ENCODE measurements at regions of chr21 and their contacts with region 1.

Region 1: GRCh38 chr21:32612075-32612998 is at the start of gene CFAP298:
- DNase-seq: peak; percentile 76 to 98 (median 86)
- ATAC-seq: peak; percentile 93
- H3K4me3 ChIP-seq: peak within 1 kb of the TSS; percentile 83
- H3K4me3 Mint-ChIP-seq: peak within 1 kb of the TSS; percentile 99
- H3K27ac ChIP-seq: peak within 1 kb of the TSS; percentile 76 to 96
- H3K27ac Mint-ChIP-seq: peak within 1 kb of the TSS; percentile 87
- H3K4me1 ChIP-seq: peaks cover 26% of the 10 kb centered on the region
- H3K4me1 Mint-ChIP-seq: peaks cover 27% of the 10 kb centered on the region
- H3K27me3 ChIP-seq: no peaks in the 10 kb centered on the region
- H3K27me3 Mint-ChIP-seq: no peaks in the 10 kb centered on the region
- CTCF ChIP-seq: no peak
- total RNA-seq, gene CFAP298: 7.6 to 9.4 TPM

Region 2: DNA sequence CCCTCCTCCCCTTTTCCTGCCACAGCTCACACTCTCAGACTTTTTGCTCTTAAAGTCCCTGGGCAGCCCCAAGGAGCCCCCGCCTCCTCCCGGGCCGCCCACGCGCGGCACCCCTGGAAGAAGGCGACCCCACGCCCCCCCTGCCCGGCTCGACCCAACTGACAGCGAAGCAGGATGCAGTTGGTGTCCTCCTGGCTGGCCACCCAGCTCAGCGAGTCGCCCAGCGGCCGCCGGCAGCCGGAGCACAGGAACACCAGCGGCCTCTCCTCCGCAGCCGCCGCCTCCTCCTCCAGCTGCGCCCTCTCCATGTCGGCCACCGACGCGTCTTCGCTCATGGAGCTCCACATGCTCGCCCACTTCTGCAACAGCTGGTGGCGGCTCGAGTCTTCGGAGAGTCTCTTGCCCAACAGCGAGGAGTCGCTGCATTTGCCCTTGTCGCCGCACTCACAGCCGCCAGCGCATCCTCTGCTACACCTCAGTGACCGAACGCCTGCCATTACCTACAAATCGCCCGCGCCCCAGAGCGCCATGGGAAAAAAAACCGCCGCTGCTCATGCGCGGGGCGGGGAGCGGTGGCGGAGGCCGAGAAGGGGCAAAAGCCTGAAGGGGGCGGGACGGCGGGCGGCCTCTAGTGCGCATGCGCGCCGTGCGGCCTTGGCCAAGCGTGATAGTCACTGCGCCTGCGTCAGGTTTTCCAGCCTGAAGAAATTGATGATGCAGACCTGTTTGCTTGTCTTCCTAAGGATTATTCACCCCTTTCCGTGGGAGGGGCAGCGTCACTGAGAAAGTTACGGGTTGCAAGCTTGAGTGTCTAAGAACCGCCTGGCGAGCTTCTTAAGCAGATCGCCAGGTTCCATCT is 333.6 kb before region 1 on chr21 and contains the start of gene MIS18A:
- CTCF ChIA-PET with region 1: no interaction called
- POLR2A ChIA-PET with region 1: no interaction called
- intact Hi-C with region 1: loop called (anchors 2 to 5 kb)
- DNase-seq: peak; percentile 92 to 99 (median 97)
- ATAC-seq: peak; percentile 94
- H3K4me3 ChIP-seq: peak within 1 kb of the TSS; percentile 94
- H3K4me3 Mint-ChIP-seq: peak within 1 kb of the TSS; percentile 99
- H3K27ac ChIP-seq: peak within 1 kb of the TSS in 1 of 2 donors; percentile 26
- H3K27ac Mint-ChIP-seq: peak within 1 kb of the TSS; percentile 94
- H3K4me1 ChIP-seq: peaks cover 20% of the 10 kb centered on the region
- H3K4me1 Mint-ChIP-seq: peaks cover 29% of the 10 kb centered on the region
- H3K27me3 ChIP-seq: no peaks in the 10 kb centered on the region
- H3K27me3 Mint-ChIP-seq: no peaks in the 10 kb centered on the region
- CTCF ChIP-seq: no peak
- total RNA-seq, gene MIS18A: 2.7 to 3.0 TPM

Region 3: GRCh38 chr21:32412162-32413014 is 199.9 kb before region 1 on chr21 and contains the start of gene EVA1C:
- CTCF ChIA-PET with region 1: no interaction called
- POLR2A ChIA-PET with region 1: interaction called, 19 read pairs
- intact Hi-C with region 1: no loop called
- DNase-seq: peak; percentile 54 to 92 (median 66)
- ATAC-seq: peak; percentile 62
- H3K4me3 ChIP-seq: peak within 1 kb of the TSS; percentile 96
- H3K4me3 Mint-ChIP-seq: peak within 1 kb of the TSS; percentile 97
- H3K27ac ChIP-seq: peak within 1 kb of the TSS; percentile 64 to 96
- H3K27ac Mint-ChIP-seq: peak within 1 kb of the TSS; percentile 97
- H3K4me1 ChIP-seq: peaks cover 31% of the 10 kb centered on the region
- H3K4me1 Mint-ChIP-seq: peaks cover 52% of the 10 kb centered on the region
- H3K27me3 ChIP-seq: no peaks in the 10 kb centered on the region
- H3K27me3 Mint-ChIP-seq: no peaks in the 10 kb centered on the region
- CTCF ChIP-seq: peak; percentile 17
- total RNA-seq, gene EVA1C: 11.1 to 12.7 TPM

Region 4: DNA sequence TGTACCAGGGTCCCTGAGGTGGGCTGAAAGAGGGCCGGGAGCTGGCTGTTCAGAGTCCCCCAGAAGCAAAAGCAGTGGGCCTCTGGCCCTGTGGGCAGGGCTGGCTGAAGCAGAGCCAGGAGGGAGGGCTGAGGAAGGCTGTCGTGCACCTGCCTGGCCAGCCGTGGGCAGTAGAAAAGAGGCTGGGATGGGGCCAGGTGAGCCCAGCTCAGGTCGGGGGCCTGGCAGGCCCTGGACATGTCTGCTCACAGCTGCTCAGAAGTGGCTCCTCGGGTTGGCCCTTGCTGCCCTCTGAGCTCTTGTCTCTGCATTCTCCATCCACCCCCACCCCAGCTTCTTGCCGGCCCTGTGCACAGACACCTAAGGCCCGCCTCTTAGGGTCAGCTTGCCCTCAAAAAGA is 87.1 kb before region 1 on chr21:
- CTCF ChIA-PET with region 1: no interaction called
- POLR2A ChIA-PET with region 1: no interaction called
- intact Hi-C with region 1: no loop called
- DNase-seq: no peak
- ATAC-seq: no peak
- H3K4me3 ChIP-seq: no peak overlapping the region
- H3K4me3 Mint-ChIP-seq: no peak overlapping the region
- H3K27ac ChIP-seq: no peak overlapping the region
- H3K27ac Mint-ChIP-seq: no peak overlapping the region
- H3K4me1 ChIP-seq: no peaks in the 10 kb centered on the region
- H3K4me1 Mint-ChIP-seq: no peaks in the 10 kb centered on the region
- H3K27me3 ChIP-seq: no peaks in the 10 kb centered on the region
- H3K27me3 Mint-ChIP-seq: no peaks in the 10 kb centered on the region
- CTCF ChIP-seq: no peak

Region 5: GRCh38 chr21:32569261-32570230 is 42.8 kb before region 1 on chr21:
- CTCF ChIA-PET with region 1: no interaction called
- POLR2A ChIA-PET with region 1: interaction called, 14 read pairs
- intact Hi-C with region 1: loop called in 1 of 2 experiments (anchors 2 kb)
- DNase-seq: peak; percentile 70 to 93 (median 78)
- ATAC-seq: peak; percentile 87
- H3K4me3 ChIP-seq: peak overlapping the region; percentile 70
- H3K4me3 Mint-ChIP-seq: peak overlapping the region; percentile 90
- H3K27ac ChIP-seq: peak overlapping the region; percentile 40 to 50
- H3K27ac Mint-ChIP-seq: peak overlapping the region; percentile 86
- H3K4me1 ChIP-seq: peaks cover 22% of the 10 kb centered on the region
- H3K4me1 Mint-ChIP-seq: peaks cover 21% of the 10 kb centered on the region
- H3K27me3 ChIP-seq: no peaks in the 10 kb centered on the region
- H3K27me3 Mint-ChIP-seq: no peaks in the 10 kb centered on the region
- CTCF ChIP-seq: peak; percentile 88

Region 6: DNA sequence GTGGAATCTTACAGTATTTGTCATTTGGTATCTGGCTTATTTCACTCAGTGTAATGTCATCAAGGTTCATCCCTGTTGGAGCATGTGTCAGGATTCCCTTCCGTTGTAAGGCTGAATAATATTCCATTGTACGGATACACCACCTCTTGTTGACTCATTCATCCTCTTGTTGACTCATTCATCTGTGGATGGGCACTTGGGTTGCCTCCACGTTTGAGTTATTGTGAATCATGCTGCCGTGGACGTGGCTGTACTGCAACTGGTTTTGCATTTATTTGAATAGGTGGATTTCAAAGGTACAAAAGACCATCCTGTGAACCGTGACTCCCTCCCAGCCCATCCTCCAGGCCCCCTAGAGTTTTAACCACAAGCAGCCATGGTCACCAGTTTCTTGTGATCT is 15.1 kb before region 1 on chr21:
- CTCF ChIA-PET with region 1: interaction called, 9 read pairs
- POLR2A ChIA-PET with region 1: interaction called, 19 read pairs
- intact Hi-C with region 1: no loop called
- DNase-seq: no peak
- ATAC-seq: no peak
- H3K4me3 ChIP-seq: no peak overlapping the region
- H3K4me3 Mint-ChIP-seq: no peak overlapping the region
- H3K27ac ChIP-seq: no peak overlapping the region
- H3K27ac Mint-ChIP-seq: no peak overlapping the region
- H3K4me1 ChIP-seq: no peaks in the 10 kb centered on the region
- H3K4me1 Mint-ChIP-seq: no peaks in the 10 kb centered on the region
- H3K27me3 ChIP-seq: no peaks in the 10 kb centered on the region
- H3K27me3 Mint-ChIP-seq: no peaks in the 10 kb centered on the region
- CTCF ChIP-seq: no peak

Region 7: GRCh38 chr21:32727687-32728455 is 115.5 kb after region 1 on chr21 and contains the start of gene SYNJ1:
- CTCF ChIA-PET with region 1: no interaction called
- POLR2A ChIA-PET with region 1: interaction called, 11 read pairs
- intact Hi-C with region 1: loop called (anchors 2 to 5 kb)
- DNase-seq: peak; percentile 85 to 97 (median 92)
- ATAC-seq: peak; percentile 85
- H3K4me3 ChIP-seq: peak within 1 kb of the TSS; percentile 95
- H3K4me3 Mint-ChIP-seq: peak within 1 kb of the TSS; percentile 97
- H3K27ac ChIP-seq: peak within 1 kb of the TSS; percentile 72 to 81
- H3K27ac Mint-ChIP-seq: peak within 1 kb of the TSS; percentile 90
- H3K4me1 ChIP-seq: peaks cover 27% of the 10 kb centered on the region
- H3K4me1 Mint-ChIP-seq: peaks cover 75% of the 10 kb centered on the region
- H3K27me3 ChIP-seq: no peaks in the 10 kb centered on the region
- H3K27me3 Mint-ChIP-seq: no peaks in the 10 kb centered on the region
- CTCF ChIP-seq: no peak
- total RNA-seq, gene SYNJ1: 14.3 to 15.6 TPM

Region 8: DNA sequence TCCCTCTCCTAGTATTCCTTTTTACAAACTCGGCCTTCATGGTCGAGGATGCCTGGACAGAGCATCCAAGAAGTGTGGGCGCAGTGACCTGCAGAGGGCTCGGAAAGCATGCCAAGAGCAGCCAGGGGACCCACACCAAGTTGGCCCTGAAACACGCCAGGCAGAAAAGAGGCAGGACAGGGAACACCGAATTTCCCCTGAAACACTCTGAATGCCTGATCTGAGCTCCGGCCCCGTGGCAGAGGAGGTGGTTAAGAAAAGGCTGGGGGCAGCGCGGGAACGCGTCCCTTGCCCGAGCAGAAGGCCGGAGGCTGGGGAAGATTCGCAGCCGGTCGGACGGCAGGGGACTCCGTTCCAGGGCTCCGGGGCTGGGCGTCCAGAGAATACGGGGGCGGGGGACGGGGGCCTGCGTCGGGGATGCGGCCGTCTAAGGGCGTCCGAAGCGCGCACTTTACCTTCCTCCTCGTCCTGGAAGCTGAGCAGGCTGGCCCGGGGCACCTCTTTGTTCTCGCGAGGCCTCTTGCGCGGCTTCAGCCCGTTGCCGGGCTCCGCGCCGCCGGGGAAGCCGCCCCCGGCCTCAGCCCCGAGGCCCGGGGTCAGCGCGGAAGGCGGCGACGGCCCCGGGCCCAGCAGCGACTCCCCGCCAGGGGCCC is 158.7 kb after region 1 on chr21:
- CTCF ChIA-PET with region 1: interaction called, 5 read pairs
- POLR2A ChIA-PET with region 1: interaction called, 10 read pairs
- intact Hi-C with region 1: loop called (anchors 2 to 5 kb)
- DNase-seq: peak in 9 of 14 experiments; percentile 1 to 56 (median 33)
- ATAC-seq: peak; percentile 15
- H3K4me3 ChIP-seq: peak overlapping the region; percentile 84
- H3K4me3 Mint-ChIP-seq: peak overlapping the region; percentile 97
- H3K27ac ChIP-seq: peak overlapping the region in 1 of 2 donors; percentile 82
- H3K27ac Mint-ChIP-seq: peak overlapping the region; percentile 93
- H3K4me1 ChIP-seq: peaks cover 30% of the 10 kb centered on the region
- H3K4me1 Mint-ChIP-seq: peaks cover 68% of the 10 kb centered on the region
- H3K27me3 ChIP-seq: no peaks in the 10 kb centered on the region
- H3K27me3 Mint-ChIP-seq: peaks cover 8% of the 10 kb centered on the region
- CTCF ChIP-seq: no peak